PC-3 (cell line): ENCODE measurements at regions of chr15 and their contacts with region 1.

Region 1: GRCh38 chr15:74373731-74374647 is 6.5 kb upstream of the CYP11A1 start:
- DNase-seq: peak; percentile 89
- ATAC-seq: peak; percentile 94
- H3K4me3 ChIP-seq: peak overlapping the region; percentile 85
- H3K27ac ChIP-seq: no peak overlapping the region
- H3K4me1 ChIP-seq: peaks cover 11% of the 10 kb centered on the region
- H3K27me3 ChIP-seq: peaks cover 11% of the 10 kb centered on the region
- CTCF ChIP-seq: peak; percentile 91

Region 2: GRCh38 chr15:74438721-74439316 is 64.8 kb after region 1 on chr15:
- CTCF ChIA-PET with region 1: no interaction called
- POLR2A ChIA-PET with region 1: no interaction called
- intact Hi-C with region 1: loop called (anchors 1 kb)
- DNase-seq: peak; percentile 89
- ATAC-seq: peak; percentile 78
- H3K4me3 ChIP-seq: no peak overlapping the region
- H3K27ac ChIP-seq: no peak overlapping the region
- H3K4me1 ChIP-seq: peaks cover 15% of the 10 kb centered on the region
- H3K27me3 ChIP-seq: no peaks in the 10 kb centered on the region
- CTCF ChIP-seq: peak; percentile 94

Region 3: DNA sequence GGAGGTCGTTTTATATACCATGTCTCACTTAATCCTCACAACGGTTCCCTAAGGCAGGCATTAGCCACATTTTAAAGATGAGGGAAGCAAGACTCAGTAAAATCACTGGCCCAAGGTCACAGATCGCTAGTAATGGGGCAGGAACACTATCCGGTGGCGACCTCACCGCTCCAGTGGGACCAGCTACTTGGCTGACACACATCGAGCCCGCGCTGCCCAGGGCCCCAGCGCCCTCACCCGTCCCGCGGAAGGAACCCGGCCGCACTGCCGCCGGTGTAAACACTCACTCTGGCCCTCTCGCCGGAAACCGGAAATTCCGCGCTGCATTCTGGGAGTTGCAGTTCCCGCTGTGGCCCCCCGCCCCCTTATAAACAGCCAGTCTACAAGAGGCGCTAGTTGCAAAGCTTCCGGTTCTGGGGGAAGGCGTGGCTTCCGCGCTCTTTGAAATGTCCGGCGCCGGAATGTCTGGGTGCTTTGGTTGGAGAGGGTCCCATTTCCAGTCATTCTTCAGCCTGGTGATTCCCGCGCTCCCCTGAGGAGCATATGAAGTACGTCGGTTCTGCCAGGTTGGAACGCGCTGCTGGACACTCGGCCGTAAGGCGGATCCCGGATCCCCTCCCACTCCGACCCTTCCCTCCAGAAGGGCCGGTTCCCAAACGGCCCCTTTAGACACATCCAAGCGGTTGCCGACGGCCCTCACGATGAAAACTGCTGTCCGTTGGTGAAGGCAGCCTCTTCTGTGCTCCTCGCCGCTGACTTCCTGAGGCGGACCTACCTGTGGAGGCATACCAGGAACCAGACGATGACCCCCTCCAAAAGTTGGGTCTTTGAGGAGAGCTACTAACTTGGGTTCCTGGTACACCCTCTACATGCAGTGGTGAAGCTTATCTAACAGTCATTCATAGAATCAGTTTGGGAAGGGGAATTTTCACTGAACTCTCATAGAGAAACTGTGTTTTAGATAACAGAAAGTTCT is 87.2 kb after region 1 on chr15 and contains the start of gene UBL7:
- CTCF ChIA-PET with region 1: no interaction called
- POLR2A ChIA-PET with region 1: no interaction called
- intact Hi-C with region 1: loop called (anchors 1 kb)
- DNase-seq: peak; percentile 97
- ATAC-seq: peak; percentile 95
- H3K4me3 ChIP-seq: peak within 1 kb of the TSS; percentile 85
- H3K27ac ChIP-seq: peak within 1 kb of the TSS; percentile 57
- H3K4me1 ChIP-seq: 0 out of 2 replicates have a peak, but pooled peaks cover 5% of the 10 kb centered on the region
- H3K27me3 ChIP-seq: no peaks in the 10 kb centered on the region
- CTCF ChIP-seq: peak; percentile 42; the same call in 1 of the 2 replicates
- total RNA-seq, gene UBL7: 46.1 and 57.1 TPM in 2 replicates

Region 4: GRCh38 chr15:74552773-74553441 is 178.9 kb after region 1 on chr15:
- CTCF ChIA-PET with region 1: no interaction called
- POLR2A ChIA-PET with region 1: no interaction called
- intact Hi-C with region 1: no loop called
- DNase-seq: no peak
- ATAC-seq: no peak
- H3K4me3 ChIP-seq: no peak overlapping the region
- H3K27ac ChIP-seq: no peak overlapping the region
- H3K4me1 ChIP-seq: no peaks in the 10 kb centered on the region
- H3K27me3 ChIP-seq: no peaks in the 10 kb centered on the region
- CTCF ChIP-seq: no peak

Region 5: DNA sequence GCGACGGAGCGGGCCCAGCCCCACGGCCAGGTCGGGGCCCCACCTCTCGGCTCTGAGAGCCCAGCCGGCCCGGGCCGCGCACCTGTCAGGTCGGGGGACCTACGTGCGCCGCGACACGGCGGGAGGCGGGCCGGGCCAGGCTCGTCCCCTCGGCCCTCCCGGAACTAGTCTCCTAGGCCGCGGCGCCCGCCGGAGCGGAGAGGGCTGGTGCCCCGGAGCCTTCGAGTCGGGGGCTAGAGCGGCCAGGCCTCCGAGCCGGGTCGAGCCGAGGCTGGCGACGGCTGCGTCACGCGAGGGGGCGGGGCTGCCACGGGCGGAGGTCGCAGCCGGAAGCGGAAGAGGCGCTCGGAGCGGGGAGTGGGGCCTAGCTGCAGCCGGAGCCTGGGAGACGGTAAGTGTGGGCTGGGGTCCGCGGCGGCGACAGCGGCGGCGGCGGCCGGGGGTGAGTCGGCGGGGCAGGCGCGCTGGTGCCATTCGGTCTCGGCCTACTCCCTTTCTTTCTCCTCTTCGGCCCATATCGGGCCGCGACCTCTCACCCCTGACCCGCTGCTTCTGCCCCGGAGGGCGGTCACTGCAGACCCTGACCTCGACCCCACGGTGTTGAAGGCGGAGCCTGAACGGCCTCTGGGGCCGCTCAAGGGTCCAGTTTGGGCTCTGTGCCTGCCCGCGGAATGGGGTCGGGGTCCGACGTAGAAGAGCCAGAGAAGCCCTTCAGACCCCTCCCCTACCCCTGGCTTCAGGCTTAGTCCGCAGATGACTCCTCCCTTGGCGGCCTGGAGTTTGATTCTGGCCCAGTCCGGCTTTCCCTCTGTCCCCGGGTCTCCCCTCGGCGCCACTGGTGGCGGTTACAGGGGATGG is 241.7 kb after region 1 on chr15 and contains the start of gene CLK3:
- CTCF ChIA-PET with region 1: interaction called, 3 read pairs
- POLR2A ChIA-PET with region 1: no interaction called
- intact Hi-C with region 1: loop called (anchors 5 kb)
- DNase-seq: peak; percentile 95
- ATAC-seq: peak; percentile 89
- H3K4me3 ChIP-seq: peak within 1 kb of the TSS; percentile 100
- H3K27ac ChIP-seq: peak within 1 kb of the TSS; percentile 68
- H3K4me1 ChIP-seq: peaks cover 16% of the 10 kb centered on the region
- H3K27me3 ChIP-seq: no peaks in the 10 kb centered on the region
- CTCF ChIP-seq: no peak
- total RNA-seq, gene CLK3: 56.2 and 64.1 TPM in 2 replicates

Region 6: GRCh38 chr15:74635228-74635627 is 261.2 kb after region 1 on chr15:
- CTCF ChIA-PET with region 1: no interaction called
- POLR2A ChIA-PET with region 1: no interaction called
- intact Hi-C with region 1: loop called (anchors 5 kb)
- DNase-seq: peak; percentile 81
- ATAC-seq: peak; percentile 79
- H3K4me3 ChIP-seq: no peak overlapping the region
- H3K27ac ChIP-seq: no peak overlapping the region
- H3K4me1 ChIP-seq: no peaks in the 10 kb centered on the region
- H3K27me3 ChIP-seq: no peaks in the 10 kb centered on the region
- CTCF ChIP-seq: peak; percentile 93